GM10248 (cell line): ENCODE measurements at regions of chr13 and their contacts with region 1.

Region 1: DNA sequence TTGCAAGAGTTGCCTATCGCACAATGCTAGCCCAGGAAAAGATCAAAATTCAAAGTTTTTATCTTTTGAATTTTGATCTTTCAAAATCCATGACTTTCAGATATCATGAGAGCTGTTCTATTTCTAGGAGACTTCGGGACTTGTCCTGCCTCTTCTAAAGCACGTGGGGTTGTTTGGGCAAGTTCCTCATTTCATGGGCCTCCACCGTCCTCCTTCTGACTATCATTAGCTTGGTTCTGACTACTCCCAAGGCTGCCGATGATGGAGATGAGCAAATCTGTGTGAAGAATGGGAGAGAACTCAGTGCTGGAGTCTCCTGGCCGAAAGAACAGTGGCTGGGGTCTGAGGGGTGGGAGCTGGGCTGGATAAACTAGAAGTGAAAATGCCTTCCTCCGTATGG is 86.5 kb downstream of the COL4A1 start:
- DNase-seq: no peak
- CTCF ChIP-seq: no peak

Region 2: GRCh38 chr13:109281017-109281902 is 939.2 kb before region 1 on chr13:
- CTCF ChIA-PET with region 1: no interaction called
- POLR2A ChIA-PET with region 1: no interaction called
- DNase-seq: no peak
- CTCF ChIP-seq: no peak

Region 3: GRCh38 chr13:110233181-110233950 is 12.9 kb after region 1 on chr13:
- CTCF ChIA-PET with region 1: interaction called, 18 read pairs
- POLR2A ChIA-PET with region 1: no interaction called
- DNase-seq: no peak
- CTCF ChIP-seq: no peak

Region 4: DNA sequence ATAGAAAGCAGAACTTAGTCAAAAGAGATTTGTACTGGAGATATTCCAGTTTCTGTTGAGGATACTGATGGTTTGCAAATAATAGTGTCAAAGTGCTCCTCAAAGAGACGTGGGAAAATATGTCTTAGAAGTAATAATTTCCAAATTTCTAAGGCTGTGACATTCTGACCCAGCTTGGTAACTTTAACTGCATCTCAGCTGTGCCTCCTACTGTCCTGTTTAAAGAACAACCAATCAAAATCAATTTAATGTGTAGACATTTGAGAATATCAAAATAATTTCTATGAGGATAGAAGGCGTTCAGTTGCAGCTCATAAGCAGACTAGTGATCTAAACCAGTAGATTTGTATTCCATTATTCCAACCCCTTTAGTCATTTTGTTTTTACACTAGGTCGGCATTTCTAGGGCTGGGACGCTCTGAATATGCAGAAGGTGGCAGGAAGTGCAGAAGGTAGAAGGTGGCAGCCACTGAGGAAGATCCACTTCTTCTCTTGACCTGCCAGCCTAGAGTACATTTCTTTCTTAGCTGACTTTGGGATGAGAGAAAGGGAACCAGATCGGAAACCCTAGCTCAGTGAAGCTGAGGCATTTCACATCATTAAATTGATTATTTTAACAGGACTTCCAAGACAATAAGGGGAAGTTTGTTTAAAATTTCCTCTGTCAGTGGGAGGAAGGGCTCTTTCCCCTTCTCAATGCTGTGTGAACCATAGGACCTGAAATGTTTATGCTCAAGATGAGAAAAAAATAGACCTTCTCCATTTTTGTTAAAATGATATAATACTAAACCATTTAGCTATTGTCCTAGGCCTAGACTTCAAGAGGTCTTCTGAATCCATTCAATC is 19.0 kb after region 1 on chr13:
- CTCF ChIA-PET with region 1: interaction called, 10 read pairs
- POLR2A ChIA-PET with region 1: no interaction called
- DNase-seq: no peak
- CTCF ChIP-seq: no peak

Region 5: DNA sequence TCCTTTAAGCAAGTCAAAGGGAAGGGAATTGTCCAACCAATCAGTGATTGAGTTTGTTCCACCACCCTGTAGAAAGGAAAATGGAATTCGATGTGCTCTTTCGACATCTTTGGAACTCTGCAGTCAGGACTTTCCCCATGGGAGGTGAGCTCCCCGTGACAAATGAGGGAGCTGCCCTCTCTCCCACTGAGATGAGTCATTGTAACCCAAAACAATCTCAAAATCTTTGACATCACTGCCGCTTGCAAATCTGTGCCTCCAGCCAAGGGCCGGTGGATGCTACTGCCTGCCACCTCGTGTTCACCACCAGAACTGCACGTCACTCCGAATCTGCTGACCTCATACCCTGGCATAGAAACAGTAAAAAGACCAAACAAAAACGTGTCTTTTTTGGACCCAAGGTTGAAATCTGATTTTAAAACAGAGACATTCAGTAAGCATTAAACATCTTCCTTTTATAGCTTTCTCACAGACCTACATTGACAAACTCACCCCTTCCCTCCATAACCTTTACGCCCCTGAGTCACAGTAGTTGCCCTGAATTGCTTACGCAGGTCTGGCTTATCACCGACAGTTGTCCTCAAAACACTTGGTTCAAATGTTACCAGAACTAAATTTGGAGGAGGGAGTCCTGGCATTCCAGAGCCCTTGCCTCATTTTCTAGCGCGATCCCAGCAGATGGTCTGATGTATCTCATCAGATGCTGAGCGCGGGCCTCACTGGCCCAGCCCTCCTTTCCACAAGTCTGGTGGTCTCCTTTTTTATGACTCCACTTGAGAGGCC is 191.9 kb after region 1 on chr13:
- CTCF ChIA-PET with region 1: interaction called, 45 read pairs
- POLR2A ChIA-PET with region 1: no interaction called
- DNase-seq: peak; percentile 87
- CTCF ChIP-seq: peak; percentile 83

Region 6: GRCh38 chr13:110444226-110444653 is 223.8 kb after region 1 on chr13:
- CTCF ChIA-PET with region 1: interaction called, 27 read pairs
- POLR2A ChIA-PET with region 1: no interaction called
- DNase-seq: peak; percentile 47
- CTCF ChIP-seq: no peak